Activated CD4-positive, alpha-beta memory T cell treated with anti-CD3 and anti-CD28 coated beads for 36 hours (primary cell): ENCODE measurements at regions of chr1 and their contacts with region 1.

Region 1: DNA sequence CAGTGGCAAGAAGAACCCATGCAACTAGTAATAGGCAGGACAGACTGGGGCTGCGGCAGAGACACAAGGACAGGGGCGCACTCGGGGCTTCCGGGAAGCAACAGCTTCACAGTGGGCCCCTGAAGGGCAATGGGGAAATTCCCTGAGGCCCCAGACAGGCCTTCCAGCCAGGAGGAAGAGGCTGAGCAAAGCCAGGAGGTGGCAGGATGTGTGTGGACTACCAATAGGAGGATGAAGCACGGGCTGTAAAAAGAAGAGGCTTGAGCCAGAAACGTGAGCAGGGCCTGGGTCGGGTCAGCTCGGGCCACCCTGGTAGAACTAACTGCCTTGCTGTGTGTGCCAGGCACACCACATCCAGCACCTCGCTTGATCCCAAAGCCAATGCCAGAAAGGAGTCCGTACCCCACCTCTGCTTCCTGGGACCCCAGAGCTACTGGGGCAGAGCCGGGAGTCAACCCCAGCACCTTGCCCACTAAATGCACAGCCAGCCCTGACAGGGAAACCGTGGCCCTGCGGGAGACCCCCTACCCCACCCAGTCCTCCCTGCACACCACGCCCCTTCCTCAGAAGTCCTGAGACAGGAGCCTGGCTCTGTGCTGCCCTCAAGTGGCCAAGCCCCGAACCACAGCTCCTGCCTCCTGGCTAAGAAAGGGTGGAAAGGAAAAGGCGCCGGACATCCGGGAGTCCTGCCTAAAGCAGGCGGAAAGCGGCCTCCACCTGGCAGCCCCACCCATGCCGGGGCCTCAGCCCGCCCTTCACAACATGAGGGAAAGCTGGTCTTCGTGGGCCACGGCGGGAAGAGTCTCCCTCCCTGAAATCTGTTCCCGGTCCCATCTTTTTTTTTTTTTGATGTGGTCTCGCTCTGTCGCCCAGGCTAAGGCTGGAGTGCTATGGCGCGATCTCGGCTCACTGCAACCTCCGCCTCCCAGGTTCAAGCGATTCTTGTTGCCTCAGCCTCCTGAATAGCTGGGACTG is 33.7 kb downstream of the TTC39A start:
- DNase-seq: peak; percentile 87
- H3K4me3 Mint-ChIP-seq: peak overlapping the region; percentile 48
- H3K27ac Mint-ChIP-seq: no peak overlapping the region
- H3K4me1 Mint-ChIP-seq: peaks cover 14% of the 10 kb centered on the region
- H3K27me3 Mint-ChIP-seq: no peaks in the 10 kb centered on the region

Region 2: DNA sequence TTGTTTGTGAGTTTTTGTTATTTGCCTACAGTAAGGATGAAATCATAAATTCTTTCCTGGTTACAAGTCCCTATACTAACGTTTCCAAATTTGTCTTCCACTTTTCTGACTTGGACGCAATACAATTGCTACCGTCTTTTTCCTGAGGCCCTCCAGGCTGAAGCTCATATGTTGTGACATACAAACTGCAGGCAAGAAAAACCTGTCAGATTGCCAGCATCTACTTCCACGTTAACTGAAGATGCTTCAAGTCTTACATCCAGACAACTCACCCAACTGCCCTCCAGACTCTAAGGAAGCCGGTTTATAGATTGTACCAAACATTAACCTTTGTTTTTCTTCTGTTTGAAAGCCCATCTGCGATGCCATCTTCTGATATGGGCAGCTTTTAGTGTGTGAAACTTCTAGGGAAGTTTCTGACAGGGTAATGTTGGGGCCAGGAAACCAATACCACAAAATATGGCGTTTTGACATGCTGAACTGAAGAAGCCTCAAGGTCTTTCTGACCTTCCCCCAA is 82.0 kb before region 1 on chr1:
- CTCF ChIA-PET with region 1: interaction called, 5 read pairs
- POLR2A ChIA-PET with region 1: no interaction called
- intact Hi-C with region 1: loop called (anchors 5 kb)
- DNase-seq: peak; percentile 22
- H3K4me3 Mint-ChIP-seq: no peak overlapping the region
- H3K27ac Mint-ChIP-seq: peak overlapping the region; percentile 23
- H3K4me1 Mint-ChIP-seq: peaks cover 21% of the 10 kb centered on the region
- H3K27me3 Mint-ChIP-seq: no peaks in the 10 kb centered on the region

Region 3: GRCh38 chr1:51235673-51236530 is 60.8 kb before region 1 on chr1 and contains the start of gene RNF11:
- CTCF ChIA-PET with region 1: interaction called, 13 read pairs
- POLR2A ChIA-PET with region 1: interaction called, 5 read pairs
- intact Hi-C with region 1: loop called (anchors 1 kb)
- DNase-seq: peak; percentile 94
- H3K4me3 Mint-ChIP-seq: peak within 1 kb of the TSS; percentile 89
- H3K27ac Mint-ChIP-seq: peak within 1 kb of the TSS; percentile 81
- H3K4me1 Mint-ChIP-seq: peaks cover 38% of the 10 kb centered on the region
- H3K27me3 Mint-ChIP-seq: no peaks in the 10 kb centered on the region
- total RNA-seq, gene RNF11: 26.3 to 31.9 TPM

Region 4: DNA sequence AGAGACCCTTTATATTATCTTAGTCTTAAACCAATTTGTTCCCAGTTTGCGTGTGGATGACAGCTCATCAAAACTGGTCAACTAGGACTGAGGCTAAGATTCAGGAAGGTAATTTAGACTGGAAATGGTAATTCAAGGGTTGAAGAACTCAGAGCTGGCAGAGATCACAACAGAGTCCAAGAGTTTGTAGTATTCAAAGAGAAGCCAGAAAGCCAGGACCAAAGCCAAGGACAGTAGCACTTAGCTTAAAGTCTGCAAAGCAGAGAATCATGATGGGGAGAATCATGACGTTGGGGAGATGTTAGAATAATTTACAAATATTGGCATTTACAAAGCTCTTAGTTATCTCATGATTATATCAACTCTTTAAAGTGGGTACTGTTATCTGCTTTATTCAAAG is 28.0 kb before region 1 on chr1:
- CTCF ChIA-PET with region 1: interaction called, 17 read pairs
- POLR2A ChIA-PET with region 1: no interaction called
- intact Hi-C with region 1: no loop called
- DNase-seq: no peak
- H3K4me3 Mint-ChIP-seq: no peak overlapping the region
- H3K27ac Mint-ChIP-seq: no peak overlapping the region
- H3K4me1 Mint-ChIP-seq: peaks cover 38% of the 10 kb centered on the region
- H3K27me3 Mint-ChIP-seq: no peaks in the 10 kb centered on the region